Vagina (tissue), 2 donors: ENCODE measurements at regions of chr11 and their contacts with region 1.

Region 1: DNA sequence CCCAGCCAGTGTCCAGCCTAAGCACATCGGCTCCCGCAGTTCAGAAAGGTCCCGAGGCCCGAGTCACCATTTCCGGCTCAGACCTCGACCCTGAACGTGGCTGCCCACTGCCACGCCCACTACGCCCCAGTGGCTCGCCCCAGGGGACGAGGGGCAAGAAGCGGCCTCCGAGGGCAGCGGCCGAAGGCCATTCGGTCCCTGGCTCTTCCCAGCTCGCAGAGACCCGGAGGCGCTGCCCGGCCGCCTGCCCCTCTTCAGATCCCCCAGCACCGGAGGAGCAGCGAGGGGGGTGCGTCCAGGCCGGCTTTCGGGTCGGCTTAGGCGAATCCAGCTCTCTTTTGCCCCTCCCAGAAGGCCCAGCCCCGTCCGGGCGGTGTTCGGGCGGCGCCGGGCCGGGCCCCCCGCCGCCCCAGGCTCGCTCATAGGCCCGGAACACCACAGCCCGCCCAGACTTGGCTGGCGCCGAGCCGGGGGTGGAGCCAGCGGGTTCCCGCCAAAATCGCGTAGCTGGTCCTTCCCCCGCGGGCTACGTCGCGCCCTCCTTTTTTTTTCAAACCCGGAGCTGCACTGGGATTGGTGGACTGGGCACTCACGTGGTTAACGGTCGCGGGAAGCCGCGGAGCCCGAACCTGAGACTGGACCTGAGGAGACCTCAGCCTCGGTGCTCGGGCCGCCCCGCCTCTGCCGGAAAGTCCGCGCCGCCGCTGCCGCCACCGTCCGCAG is at the start of gene WEE1:
- DNase-seq: peak; percentile 98 to 99
- H3K4me3 ChIP-seq: peak within 1 kb of the TSS; percentile 80 to 87
- H3K27ac ChIP-seq: peak within 1 kb of the TSS; percentile 99
- H3K4me1 ChIP-seq: peaks cover 63% of the 10 kb centered on the region
- H3K27me3 ChIP-seq: no peaks in the 10 kb centered on the region
- CTCF ChIP-seq: no peak
- POLR2A ChIP-seq: peak; percentile 48 to 77
- total RNA-seq, gene WEE1: 22.1 TPM

Region 2: GRCh38 chr11:9613118-9613829 is 40.1 kb after region 1 on chr11:
- intact Hi-C with region 1: loop called (anchors 5 kb)
- DNase-seq: peak in 1 of 2 donors; percentile 97
- H3K4me3 ChIP-seq: peak overlapping the region; percentile 47 to 50
- H3K27ac ChIP-seq: peak overlapping the region; percentile 99
- H3K4me1 ChIP-seq: peaks cover 15% of the 10 kb centered on the region
- H3K27me3 ChIP-seq: no peaks in the 10 kb centered on the region
- CTCF ChIP-seq: peak; percentile 87 to 92 (median 88)
- POLR2A ChIP-seq: peak in 1 of 2 donors; percentile 43